Activated T-helper 1 cell treated with anti-CD3 and anti-CD28 coated beads, Interleukin-12 subunit alpha, Interleukin-12 subunit beta, Interleukin-2, Interleukin-4 antibody, amounts not matched to agents 30 ng/mL and 10 ng/mL and 1 ng/mL, durations not matched to agents 14 hours and 24 hours and 36 hours (primary cell): ENCODE measurements at regions of chr13 and their contacts with region 1.

Region 1: DNA sequence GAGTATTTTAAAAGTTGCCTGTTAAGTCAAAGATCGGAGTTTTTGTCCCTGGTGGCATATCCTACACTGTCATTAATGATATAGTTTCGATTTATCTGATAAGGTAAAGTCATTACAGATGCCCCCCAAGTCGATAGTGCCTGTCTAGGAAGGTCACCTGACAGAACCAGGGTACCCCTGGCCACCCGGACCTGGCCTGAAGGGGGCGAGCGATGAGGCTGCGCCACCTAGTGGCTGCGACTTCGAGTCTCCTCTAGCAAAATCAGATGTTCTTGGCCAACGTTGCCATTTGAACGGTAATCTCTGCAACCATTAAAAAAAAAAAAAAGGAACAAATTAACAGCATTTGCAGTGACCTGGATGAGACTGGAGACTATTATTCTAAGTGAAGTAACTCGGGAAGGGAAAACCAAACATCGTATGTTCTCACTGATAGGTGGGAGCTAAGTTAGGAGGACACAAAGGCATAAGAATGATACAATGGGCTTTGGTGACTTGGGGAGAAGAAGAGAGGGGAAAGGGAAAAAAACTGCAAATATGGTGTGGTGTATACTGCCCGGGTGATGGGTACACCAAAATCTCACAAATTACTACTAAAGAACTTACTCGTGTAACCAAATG is 565.1 kb downstream of the LIG4 start:
- DNase-seq: peak; percentile 2
- H3K4me3 Mint-ChIP-seq: no peak overlapping the region
- H3K27ac Mint-ChIP-seq: no peak overlapping the region
- H3K4me1 Mint-ChIP-seq: no peaks in the 10 kb centered on the region
- H3K27me3 Mint-ChIP-seq: no peaks in the 10 kb centered on the region

Region 2: DNA sequence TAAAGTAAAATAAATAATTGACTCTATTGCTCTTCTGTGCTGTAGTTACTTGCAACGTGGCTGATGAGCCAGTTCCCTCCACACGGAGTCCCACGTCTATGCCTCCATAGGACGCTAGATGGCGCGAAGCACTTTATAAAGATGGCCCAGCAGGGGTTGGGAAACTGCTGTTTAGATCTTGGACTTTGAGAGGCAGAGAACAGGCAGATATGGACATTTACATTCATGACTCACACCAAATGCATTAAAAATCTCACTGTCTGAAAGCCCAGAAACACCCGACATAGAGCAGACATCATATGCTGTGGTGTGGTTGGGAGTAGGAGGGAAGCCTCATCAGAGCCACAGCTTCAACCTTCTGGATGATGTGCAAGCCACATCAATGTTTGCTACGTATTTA is 439.1 kb before region 1 on chr13:
- intact Hi-C with region 1: loop called (anchors 1 kb)
- DNase-seq: peak; percentile 11
- H3K4me3 Mint-ChIP-seq: no peak overlapping the region
- H3K27ac Mint-ChIP-seq: no peak overlapping the region
- H3K4me1 Mint-ChIP-seq: no peaks in the 10 kb centered on the region
- H3K27me3 Mint-ChIP-seq: no peaks in the 10 kb centered on the region

Region 3: GRCh38 chr13:107835339-107836018 is 185.3 kb after region 1 on chr13:
- intact Hi-C with region 1: no loop called
- DNase-seq: no peak
- H3K4me3 Mint-ChIP-seq: no peak overlapping the region
- H3K27ac Mint-ChIP-seq: no peak overlapping the region
- H3K4me1 Mint-ChIP-seq: no peaks in the 10 kb centered on the region
- H3K27me3 Mint-ChIP-seq: no peaks in the 10 kb centered on the region